Naive thymus-derived CD4-positive, alpha-beta T cell (primary cell): ENCODE measurements at regions of chr15 and their contacts with region 1.

Region 1: GRCh38 chr15:40807028-40807887 is at the starts of genes DNAJC17 and ZFYVE19:
- DNase-seq: peak; percentile 86 to 96 (median 91)
- ATAC-seq: peak; percentile 99
- H3K4me3 ChIP-seq: peak within 1 kb of the TSS; percentile 99
- H3K4me3 Mint-ChIP-seq: peak within 1 kb of the TSS; percentile 92 to 98 (median 96)
- H3K27ac ChIP-seq: peak within 1 kb of the TSS; percentile 95
- H3K27ac Mint-ChIP-seq: peak within 1 kb of the TSS; percentile 84 to 98 (median 96)
- H3K4me1 ChIP-seq: peaks cover 14 to 16% of the 10 kb centered on the region in 2 donors
- H3K4me1 Mint-ChIP-seq: peaks cover 17 to 43% (median 25%) of the 10 kb centered on the region in 7 donors
- H3K27me3 ChIP-seq: no peaks in the 10 kb centered on the region
- H3K27me3 Mint-ChIP-seq: no peaks in the 10 kb centered on the region
- total RNA-seq, gene DNAJC17: 28.8 to 50.9 (median 36.7) TPM
- total RNA-seq, gene ZFYVE19: 17.9 to 31.9 (median 30.5) TPM

Region 2: GRCh38 chr15:40382580-40383456 is 424.4 kb before region 1 on chr15 and contains the start of gene KNSTRN:
- CTCF ChIA-PET with region 1: no interaction called
- POLR2A ChIA-PET with region 1: no interaction called
- intact Hi-C with region 1: loop called in 1 of 2 experiments (anchors 1 kb)
- DNase-seq: peak; percentile 78 to 93 (median 91)
- ATAC-seq: peak; percentile 100
- H3K4me3 ChIP-seq: peak within 1 kb of the TSS; percentile 70
- H3K4me3 Mint-ChIP-seq: peak within 1 kb of the TSS; percentile 92 to 99 (median 98)
- H3K27ac ChIP-seq: peak within 1 kb of the TSS; percentile 65
- H3K27ac Mint-ChIP-seq: peak within 1 kb of the TSS; percentile 63 to 95 (median 85)
- H3K4me1 ChIP-seq: peaks cover 6 to 7% of the 10 kb centered on the region in 2 donors
- H3K4me1 Mint-ChIP-seq: peaks cover 14 to 26% (median 22%) of the 10 kb centered on the region in 7 donors
- H3K27me3 ChIP-seq: no peaks in the 10 kb centered on the region
- H3K27me3 Mint-ChIP-seq: peaks cover 0 to 13% (median 0%) of the 10 kb centered on the region in 5 donors
- total RNA-seq, gene KNSTRN: 3.7 to 39.6 (median 6.2) TPM

Region 3: GRCh38 chr15:40564591-40565332 is 242.5 kb before region 1 on chr15 and contains the start of gene CCDC32:
- CTCF ChIA-PET with region 1: no interaction called
- POLR2A ChIA-PET with region 1: no interaction called
- intact Hi-C with region 1: loop called in 1 of 2 experiments (anchors 1 kb)
- DNase-seq: peak; percentile 75 to 96 (median 93)
- ATAC-seq: peak; percentile 95
- H3K4me3 ChIP-seq: peak within 1 kb of the TSS; percentile 85
- H3K4me3 Mint-ChIP-seq: peak within 1 kb of the TSS; percentile 80 to 97 (median 96)
- H3K27ac ChIP-seq: peak within 1 kb of the TSS; percentile 96
- H3K27ac Mint-ChIP-seq: peak within 1 kb of the TSS; percentile 82 to 98 (median 95)
- H3K4me1 ChIP-seq: peaks cover 11 to 15% of the 10 kb centered on the region in 2 donors
- H3K4me1 Mint-ChIP-seq: peaks cover 35 to 57% (median 55%) of the 10 kb centered on the region in 7 donors
- H3K27me3 ChIP-seq: no peaks in the 10 kb centered on the region
- H3K27me3 Mint-ChIP-seq: peaks cover 0 to 8% (median 0%) of the 10 kb centered on the region in 5 donors
- total RNA-seq, gene CCDC32: 22.4 to 37.3 (median 33.3) TPM

Region 4: DNA sequence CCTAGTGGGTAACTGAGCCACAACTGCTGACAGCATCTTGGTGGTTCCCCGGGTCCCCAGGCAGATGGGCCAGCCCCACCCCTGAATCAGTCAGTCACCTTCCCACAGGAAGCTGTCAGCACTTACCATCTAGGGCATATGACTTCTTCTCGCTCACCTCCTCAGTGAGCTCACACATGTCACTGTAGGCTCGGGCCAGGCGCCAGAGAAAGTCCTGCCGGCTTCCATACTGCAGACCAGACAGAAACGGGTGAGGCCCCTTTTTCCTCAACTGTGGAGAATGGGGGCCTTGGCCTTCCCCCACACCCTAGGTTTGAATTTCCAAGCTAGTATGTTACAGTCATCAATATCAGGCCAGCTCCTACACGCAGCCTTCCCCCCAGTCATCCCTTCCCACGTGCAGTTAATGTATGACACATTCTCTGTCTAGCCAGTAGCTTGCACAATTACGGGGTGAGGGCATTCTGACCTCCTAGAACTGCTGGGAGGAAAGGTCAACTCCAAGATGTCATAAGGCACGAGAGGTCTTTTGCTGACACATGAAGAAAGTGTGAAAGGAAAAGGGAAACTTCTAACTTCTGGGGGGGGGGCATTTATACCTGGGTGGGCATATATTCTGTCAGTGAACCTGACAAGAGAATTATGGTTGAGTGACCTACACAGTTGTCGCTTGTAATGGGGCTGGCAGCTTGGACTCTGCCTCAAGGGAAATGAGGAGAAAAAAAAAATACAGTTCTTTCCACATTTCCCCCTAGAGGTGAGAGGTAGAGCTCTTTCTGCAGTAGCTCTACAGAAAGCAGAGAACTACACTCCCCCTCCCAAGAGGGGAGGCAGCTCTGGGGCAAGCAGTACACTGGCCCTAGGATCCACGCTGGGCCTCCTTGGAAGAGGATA is 63.1 kb before region 1 on chr15:
- CTCF ChIA-PET with region 1: no interaction called
- POLR2A ChIA-PET with region 1: no interaction called
- intact Hi-C with region 1: no loop called
- DNase-seq: peak in 1 of 9 donors; percentile 68
- ATAC-seq: peak; percentile 90
- H3K4me3 ChIP-seq: no peak overlapping the region
- H3K4me3 Mint-ChIP-seq: peak overlapping the region in 2 of 10 donors; percentile 25 to 74
- H3K27ac ChIP-seq: no peak overlapping the region
- H3K27ac Mint-ChIP-seq: peak overlapping the region in 3 of 9 donors; percentile 30 to 94 (median 69)
- H3K4me1 ChIP-seq: peaks cover 0 to 20% of the 10 kb centered on the region in 2 donors
- H3K4me1 Mint-ChIP-seq: peaks cover 0 to 40% (median 0%) of the 10 kb centered on the region in 7 donors
- H3K27me3 ChIP-seq: no peaks in the 10 kb centered on the region
- H3K27me3 Mint-ChIP-seq: no peaks in the 10 kb centered on the region

Region 5: GRCh38 chr15:40754883-40755811 is 52.1 kb before region 1 on chr15 and contains the start of gene RMDN3:
- CTCF ChIA-PET with region 1: no interaction called
- POLR2A ChIA-PET with region 1: interaction called, 3 read pairs
- intact Hi-C with region 1: loop called (anchors 1 kb)
- DNase-seq: peak; percentile 89 to 97 (median 92)
- ATAC-seq: peak; percentile 99
- H3K4me3 ChIP-seq: peak within 1 kb of the TSS; percentile 94
- H3K4me3 Mint-ChIP-seq: peak within 1 kb of the TSS; percentile 90 to 98 (median 94)
- H3K27ac ChIP-seq: peak within 1 kb of the TSS; percentile 95
- H3K27ac Mint-ChIP-seq: peak within 1 kb of the TSS; percentile 89 to 99 (median 95)
- H3K4me1 ChIP-seq: peaks cover 7 to 10% of the 10 kb centered on the region in 2 donors
- H3K4me1 Mint-ChIP-seq: peaks cover 16 to 37% (median 27%) of the 10 kb centered on the region in 7 donors
- H3K27me3 ChIP-seq: no peaks in the 10 kb centered on the region
- H3K27me3 Mint-ChIP-seq: no peaks in the 10 kb centered on the region
- total RNA-seq, gene RMDN3: 19.5 to 44.0 (median 31.9) TPM

Region 6: GRCh38 chr15:40782580-40783227 is 24.6 kb before region 1 on chr15:
- CTCF ChIA-PET with region 1: interaction called, 4 read pairs
- POLR2A ChIA-PET with region 1: no interaction called
- intact Hi-C with region 1: loop called in 1 of 2 experiments (anchors 2 kb)
- DNase-seq: peak; percentile 63 to 78 (median 75)
- ATAC-seq: peak; percentile 99
- H3K4me3 ChIP-seq: no peak overlapping the region
- H3K4me3 Mint-ChIP-seq: no peak overlapping the region
- H3K27ac ChIP-seq: no peak overlapping the region
- H3K27ac Mint-ChIP-seq: peak overlapping the region in 2 of 9 donors; percentile 34 to 39
- H3K4me1 ChIP-seq: peaks cover 8 to 13% of the 10 kb centered on the region in 2 donors
- H3K4me1 Mint-ChIP-seq: peaks cover 12 to 25% (median 20%) of the 10 kb centered on the region in 7 donors
- H3K27me3 ChIP-seq: no peaks in the 10 kb centered on the region
- H3K27me3 Mint-ChIP-seq: no peaks in the 10 kb centered on the region

Region 7: GRCh38 chr15:40893733-40894688 is 86.8 kb after region 1 on chr15 and contains the start of gene VPS18:
- CTCF ChIA-PET with region 1: no interaction called
- POLR2A ChIA-PET with region 1: interaction called, 4 read pairs
- intact Hi-C with region 1: loop called (anchors 1 kb)
- DNase-seq: peak; percentile 96 to 99 (median 98)
- ATAC-seq: peak; percentile 99
- H3K4me3 ChIP-seq: peak within 1 kb of the TSS; percentile 94
- H3K4me3 Mint-ChIP-seq: peak within 1 kb of the TSS; percentile 96 to 99 (median 98)
- H3K27ac ChIP-seq: peak within 1 kb of the TSS; percentile 83
- H3K27ac Mint-ChIP-seq: peak within 1 kb of the TSS; percentile 87 to 98 (median 96)
- H3K4me1 ChIP-seq: peaks cover 17 to 18% of the 10 kb centered on the region in 2 donors
- H3K4me1 Mint-ChIP-seq: peaks cover 30 to 47% (median 37%) of the 10 kb centered on the region in 7 donors
- H3K27me3 ChIP-seq: no peaks in the 10 kb centered on the region
- H3K27me3 Mint-ChIP-seq: peaks cover 0 to 7% (median 0%) of the 10 kb centered on the region in 5 donors
- total RNA-seq, gene VPS18: 19.9 to 22.3 (median 20.5) TPM

Region 8: GRCh38 chr15:41331833-41332787 is 524.9 kb after region 1 on chr15 and contains the start of gene OIP5:
- CTCF ChIA-PET with region 1: no interaction called
- POLR2A ChIA-PET with region 1: interaction called, 4 read pairs
- intact Hi-C with region 1: loop called in 1 of 2 experiments (anchors 1 kb)
- DNase-seq: peak; percentile 83 to 99 (median 97)
- ATAC-seq: peak; percentile 98
- H3K4me3 ChIP-seq: peak within 1 kb of the TSS; percentile 95
- H3K4me3 Mint-ChIP-seq: peak within 1 kb of the TSS; percentile 87 to 100 (median 97)
- H3K27ac ChIP-seq: peak within 1 kb of the TSS; percentile 52
- H3K27ac Mint-ChIP-seq: peak within 1 kb of the TSS; percentile 77 to 97 (median 91)
- H3K4me1 ChIP-seq: peaks cover 9 to 13% of the 10 kb centered on the region in 2 donors
- H3K4me1 Mint-ChIP-seq: peaks cover 12 to 32% (median 29%) of the 10 kb centered on the region in 7 donors
- H3K27me3 ChIP-seq: no peaks in the 10 kb centered on the region
- H3K27me3 Mint-ChIP-seq: no peaks in the 10 kb centered on the region
- total RNA-seq, gene OIP5: 0.32 to 15.2 (median 0.54) TPM in 4 of 5 experiments, not detected in the other